GM13977 (cell line): ENCODE measurements at regions of chr6 and their contacts with region 1.

Region 1: GRCh38 chr6:159608961-159609651 is 83.9 kb downstream of the SOD2 start:
- DNase-seq: peak; percentile 67
- CTCF ChIP-seq: peak; percentile 76

Region 2: DNA sequence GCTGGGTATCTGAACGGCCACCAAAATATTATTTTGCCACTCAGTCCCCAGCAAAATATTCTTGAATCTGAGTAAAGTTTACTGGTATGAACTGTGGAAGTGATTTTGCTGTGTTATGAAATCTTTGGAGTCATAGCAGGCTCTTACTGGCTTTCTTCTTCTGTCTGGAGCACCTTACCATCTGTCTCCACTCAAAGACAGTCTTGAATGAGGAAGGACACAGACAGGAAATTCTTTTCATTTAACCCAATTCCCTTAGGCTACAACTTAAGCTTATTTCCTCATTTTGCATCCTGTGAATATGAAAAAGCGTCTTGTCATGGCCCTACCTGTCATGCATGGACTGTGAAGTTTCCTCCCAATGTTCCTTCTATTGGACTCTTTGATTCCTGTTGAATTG is 415.2 kb before region 1 on chr6:
- in situ Hi-C with region 1: loop called (anchors 25 kb)
- DNase-seq: no peak
- CTCF ChIP-seq: no peak

Region 3: DNA sequence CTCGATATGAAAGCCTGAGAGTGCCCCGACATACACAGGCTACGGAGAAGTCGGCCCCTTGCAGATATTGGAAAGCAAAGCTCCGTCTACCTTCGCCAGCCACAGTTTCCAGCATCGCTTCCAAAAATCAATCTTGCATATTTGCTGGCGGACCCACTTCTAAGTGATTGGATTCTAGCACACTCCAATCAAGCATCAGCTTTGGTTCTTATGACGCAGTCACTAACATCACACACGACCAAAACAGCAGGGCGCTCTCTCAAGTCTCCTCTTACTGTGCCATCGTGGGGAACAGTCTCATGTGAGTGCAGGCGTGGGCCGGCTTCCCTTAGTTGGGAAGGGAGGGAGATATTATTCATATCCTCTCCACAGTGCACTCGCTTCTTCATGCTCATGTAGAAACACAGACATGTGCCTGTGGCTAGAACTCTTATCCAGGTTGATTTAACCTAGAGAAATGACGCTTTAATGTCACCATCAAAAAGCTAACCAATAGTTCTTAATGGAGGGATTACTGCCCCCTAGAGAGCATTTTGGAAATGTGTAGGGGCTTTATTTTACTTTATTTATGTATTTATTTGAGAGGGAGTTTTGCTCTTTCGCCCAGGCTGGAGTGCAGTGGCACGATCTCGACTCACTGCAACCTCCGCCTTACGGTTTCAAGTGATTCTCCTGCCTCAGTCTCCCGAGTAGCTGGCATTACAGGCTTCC is 145.8 kb before region 1 on chr6:
- in situ Hi-C with region 1: no loop called
- DNase-seq: no peak
- CTCF ChIP-seq: peak; percentile 38